ENCODE measurements at regions of chr6 and their contacts with region 1.

Region 1: DNA sequence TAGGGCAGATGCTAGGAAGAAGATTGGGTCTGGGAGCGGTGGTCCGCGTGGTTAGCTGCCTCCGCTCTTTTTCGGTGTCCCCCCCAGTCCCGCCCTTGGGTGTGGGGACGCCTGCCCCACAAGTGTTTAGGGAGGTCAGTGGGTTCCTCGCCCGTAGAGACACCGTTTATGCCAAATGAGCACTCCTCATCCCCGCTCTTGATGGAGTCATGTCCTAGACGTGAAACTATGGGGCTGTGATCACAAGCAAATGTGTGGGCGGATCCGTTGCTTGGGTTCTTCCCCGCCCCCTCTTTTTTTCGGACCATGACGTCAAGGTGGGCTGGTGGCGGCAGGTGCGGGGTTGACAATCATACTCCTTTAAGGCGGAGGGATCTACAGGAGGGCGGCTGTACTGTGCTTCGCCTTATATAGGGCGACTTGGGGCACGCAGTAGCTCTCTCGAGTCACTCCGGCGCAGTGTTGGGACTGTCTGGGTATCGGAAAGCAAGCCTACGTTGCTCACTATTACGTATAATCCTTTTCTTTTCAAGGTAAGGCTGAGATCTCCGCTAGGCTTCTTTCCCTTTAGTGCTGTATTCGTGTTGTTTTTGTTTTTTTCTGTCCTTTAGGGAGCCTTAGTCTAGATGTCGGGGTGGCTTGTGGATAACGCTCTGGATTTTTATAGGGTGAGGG is at the start of gene HSP90AB1:
- DNase-seq: peak; percentile 99
- H3K4me3 Mint-ChIP-seq: peak within 1 kb of the TSS; percentile 95
- H3K27ac Mint-ChIP-seq: peak within 1 kb of the TSS; percentile 97
- H3K4me1 Mint-ChIP-seq: peaks cover 46% of the 10 kb centered on the region
- H3K27me3 Mint-ChIP-seq: peaks cover 4% of the 10 kb centered on the region
- total RNA-seq, gene HSP90AB1: 1,951 to 2,044 TPM

Region 2: GRCh38 chr6:43774776-43775534 is 471.8 kb before region 1 on chr6:
- CTCF ChIA-PET with region 1: no interaction called
- intact Hi-C with region 1: loop called (anchors 1 kb)
- DNase-seq: peak; percentile 73
- H3K4me3 Mint-ChIP-seq: peak overlapping the region; percentile 18
- H3K27ac Mint-ChIP-seq: no peak overlapping the region
- H3K4me1 Mint-ChIP-seq: peaks cover 29% of the 10 kb centered on the region
- H3K27me3 Mint-ChIP-seq: no peaks in the 10 kb centered on the region

Region 3: GRCh38 chr6:44085220-44085619 is 161.6 kb before region 1 on chr6:
- CTCF ChIA-PET with region 1: no interaction called
- intact Hi-C with region 1: no loop called
- DNase-seq: no peak
- H3K4me3 Mint-ChIP-seq: no peak overlapping the region
- H3K27ac Mint-ChIP-seq: no peak overlapping the region
- H3K4me1 Mint-ChIP-seq: no peaks in the 10 kb centered on the region
- H3K27me3 Mint-ChIP-seq: no peaks in the 10 kb centered on the region

Region 4: DNA sequence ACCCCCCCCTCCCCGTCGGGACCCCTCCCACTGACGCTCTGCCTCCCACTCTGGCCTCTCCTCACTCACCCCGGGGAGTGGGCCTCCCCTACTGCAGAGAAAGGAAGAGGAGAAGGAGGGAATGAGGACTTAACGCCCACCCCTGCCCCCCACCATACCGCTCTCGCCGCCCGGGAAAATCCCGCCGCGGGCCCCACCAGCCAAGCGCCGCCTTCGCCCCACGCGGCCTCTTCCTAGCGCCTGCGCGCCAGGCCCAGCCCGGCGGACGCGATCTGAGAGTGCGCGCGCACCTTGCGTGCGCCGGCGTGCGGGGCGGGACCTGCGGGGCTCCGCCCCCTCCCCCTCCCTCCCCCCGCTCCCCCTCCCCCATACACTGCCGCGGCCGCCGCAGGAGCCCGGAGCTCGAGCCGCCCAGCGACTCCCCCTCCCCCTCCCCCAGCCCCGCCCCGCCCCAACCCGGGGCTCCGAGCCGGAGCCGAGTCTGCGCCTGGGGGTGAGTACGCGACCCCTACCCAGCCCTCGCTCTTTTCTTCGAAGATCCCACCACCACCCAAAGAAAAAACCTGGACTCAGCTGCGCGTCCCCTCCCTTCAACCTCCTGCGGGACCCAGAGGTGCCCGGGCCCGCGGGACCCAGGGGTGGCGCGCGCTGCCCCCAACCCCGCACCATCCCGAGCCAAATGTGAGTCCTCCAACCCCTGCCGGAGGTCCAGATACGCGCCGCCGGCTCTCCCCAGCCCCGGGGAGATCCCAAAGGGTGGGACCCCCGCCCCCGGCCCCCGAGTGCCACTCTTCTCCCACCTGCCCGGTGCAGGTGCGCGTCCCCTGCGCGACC is 119.4 kb before region 1 on chr6 and contains the starts of genes MRPL14 and TMEM63B:
- CTCF ChIA-PET with region 1: no interaction called
- intact Hi-C with region 1: loop called (anchors 1 kb)
- DNase-seq: peak; percentile 86
- H3K4me3 Mint-ChIP-seq: peak within 1 kb of the TSS; percentile 88
- H3K27ac Mint-ChIP-seq: peak within 1 kb of the TSS; percentile 93
- H3K4me1 Mint-ChIP-seq: peaks cover 41% of the 10 kb centered on the region
- H3K27me3 Mint-ChIP-seq: no peaks in the 10 kb centered on the region
- total RNA-seq, gene MRPL14: 40.9 to 41.0 TPM
- total RNA-seq, gene TMEM63B: 7.8 to 8.3 TPM

Region 5: DNA sequence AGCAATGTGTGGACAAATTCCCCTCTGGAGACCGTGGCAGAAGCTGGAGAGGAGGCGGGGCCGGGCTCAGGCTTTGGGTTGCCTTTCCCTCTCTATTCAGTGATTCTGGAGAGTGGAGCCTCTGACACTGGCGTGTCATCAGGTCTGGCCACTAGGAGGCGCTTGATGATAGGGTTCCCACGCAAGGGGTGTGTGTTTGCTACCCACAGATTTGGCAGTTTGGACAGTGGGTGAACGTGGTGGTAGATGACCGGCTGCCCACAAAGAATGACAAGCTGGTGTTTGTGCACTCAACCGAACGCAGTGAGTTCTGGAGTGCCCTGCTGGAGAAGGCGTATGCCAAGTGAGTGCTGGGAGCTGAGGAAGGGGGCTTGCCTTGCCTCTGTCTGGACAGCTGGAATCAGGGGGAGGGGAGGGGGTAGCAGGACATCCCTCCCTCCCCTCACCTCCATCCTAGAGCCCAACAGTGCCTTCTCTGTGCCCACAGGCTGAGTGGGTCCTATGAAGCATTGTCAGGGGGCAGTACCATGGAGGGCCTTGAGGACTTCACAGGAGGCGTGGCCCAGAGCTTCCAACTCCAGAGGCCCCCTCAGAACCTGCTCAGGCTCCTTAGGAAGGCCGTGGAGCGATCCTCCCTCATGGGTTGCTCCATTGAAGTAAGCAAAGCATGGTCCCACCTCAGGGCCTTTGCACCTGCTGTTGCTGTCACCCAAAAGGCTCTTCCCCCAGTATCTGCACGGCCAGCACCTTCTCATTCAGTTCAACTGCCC is 73.9 kb before region 1 on chr6:
- CTCF ChIA-PET with region 1: interaction called, 11 read pairs
- intact Hi-C with region 1: no loop called
- DNase-seq: peak; percentile 89
- H3K4me3 Mint-ChIP-seq: no peak overlapping the region
- H3K27ac Mint-ChIP-seq: no peak overlapping the region
- H3K4me1 Mint-ChIP-seq: peaks cover 4% of the 10 kb centered on the region
- H3K27me3 Mint-ChIP-seq: peaks cover 6% of the 10 kb centered on the region

Region 6: GRCh38 chr6:44257025-44257752 is 10.4 kb after region 1 on chr6 and contains the start of gene SLC35B2:
- CTCF ChIA-PET with region 1: interaction called, 66 read pairs
- intact Hi-C with region 1: loop called (anchors 1 kb)
- DNase-seq: peak; percentile 61
- H3K4me3 Mint-ChIP-seq: peak within 1 kb of the TSS; percentile 77
- H3K27ac Mint-ChIP-seq: peak within 1 kb of the TSS; percentile 86
- H3K4me1 Mint-ChIP-seq: peaks cover 54% of the 10 kb centered on the region
- H3K27me3 Mint-ChIP-seq: no peaks in the 10 kb centered on the region
- total RNA-seq, gene SLC35B2: 7.2 to 7.3 TPM

Region 7: GRCh38 chr6:44312901-44313788 is 66.3 kb after region 1 on chr6 and contains the start of gene AARS2:
- CTCF ChIA-PET with region 1: no interaction called
- intact Hi-C with region 1: loop called (anchors 1 kb)
- DNase-seq: peak; percentile 95
- H3K4me3 Mint-ChIP-seq: peak within 1 kb of the TSS; percentile 96
- H3K27ac Mint-ChIP-seq: peak within 1 kb of the TSS; percentile 79
- H3K4me1 Mint-ChIP-seq: peaks cover 17% of the 10 kb centered on the region
- H3K27me3 Mint-ChIP-seq: no peaks in the 10 kb centered on the region
- total RNA-seq, gene AARS2: 11.6 to 12.9 TPM